Dendritic cell treated with granulocyte-macrophage colony-stimulating factor and Interleukin-4, amounts not matched to agents 40 ng/mL and 50 ng/mL, for 4 days (primary cell): ENCODE measurements at regions of chr6 and their contacts with region 1.

Region 1: DNA sequence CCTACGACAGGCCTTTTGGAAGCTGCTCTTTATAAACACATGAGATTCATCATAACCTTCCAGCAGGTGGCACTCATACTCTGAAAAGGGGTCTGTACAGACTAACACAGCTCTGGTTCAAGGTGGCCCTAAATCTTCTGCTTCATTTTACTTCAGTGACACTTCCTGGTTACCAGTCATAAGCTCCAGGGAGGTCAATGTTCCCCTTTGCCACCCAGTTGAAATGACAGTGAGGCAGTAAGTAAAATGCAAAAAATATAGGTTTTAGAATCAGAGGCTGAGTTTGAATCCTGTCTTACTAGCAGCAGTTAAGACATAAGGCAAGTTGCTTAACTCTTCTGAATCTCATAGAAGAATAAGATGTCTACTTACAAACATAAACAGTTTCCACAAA is 132.8 kb downstream of the CDK19 start:
- H3K4me3 Mint-ChIP-seq: no peak overlapping the region
- H3K27ac Mint-ChIP-seq: no peak overlapping the region
- H3K4me1 Mint-ChIP-seq: peaks cover 13% of the 10 kb centered on the region
- H3K27me3 Mint-ChIP-seq: no peaks in the 10 kb centered on the region

Region 2: GRCh38 chr6:110528101-110528929 is 154.1 kb before region 1 on chr6:
- intact Hi-C with region 1: loop called (anchors 1 kb)
- H3K4me3 Mint-ChIP-seq: no peak overlapping the region
- H3K27ac Mint-ChIP-seq: no peak overlapping the region
- H3K4me1 Mint-ChIP-seq: peaks cover 31% of the 10 kb centered on the region
- H3K27me3 Mint-ChIP-seq: no peaks in the 10 kb centered on the region

Region 3: DNA sequence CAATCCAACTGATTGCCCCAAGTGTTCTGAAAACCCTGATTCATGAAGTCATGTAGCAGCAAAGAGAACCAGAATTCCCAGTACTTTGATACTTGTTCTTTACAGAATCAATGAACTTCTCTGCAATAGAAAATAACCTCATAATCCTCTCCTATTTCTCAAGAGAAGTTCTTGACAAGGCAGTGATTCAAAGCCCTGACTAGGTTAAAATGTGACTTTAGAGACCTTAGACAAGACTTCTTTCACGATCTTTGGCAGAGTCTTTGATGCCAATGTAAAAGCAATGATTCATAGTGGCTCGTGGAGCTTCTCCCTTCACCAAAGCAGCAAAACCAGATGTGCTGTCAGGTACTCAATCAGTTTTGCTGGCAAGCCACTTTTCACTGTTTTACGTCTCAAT is 37.6 kb after region 1 on chr6:
- intact Hi-C with region 1: no loop called
- H3K4me3 Mint-ChIP-seq: no peak overlapping the region
- H3K27ac Mint-ChIP-seq: no peak overlapping the region
- H3K4me1 Mint-ChIP-seq: no peaks in the 10 kb centered on the region
- H3K27me3 Mint-ChIP-seq: no peaks in the 10 kb centered on the region

Region 4: DNA sequence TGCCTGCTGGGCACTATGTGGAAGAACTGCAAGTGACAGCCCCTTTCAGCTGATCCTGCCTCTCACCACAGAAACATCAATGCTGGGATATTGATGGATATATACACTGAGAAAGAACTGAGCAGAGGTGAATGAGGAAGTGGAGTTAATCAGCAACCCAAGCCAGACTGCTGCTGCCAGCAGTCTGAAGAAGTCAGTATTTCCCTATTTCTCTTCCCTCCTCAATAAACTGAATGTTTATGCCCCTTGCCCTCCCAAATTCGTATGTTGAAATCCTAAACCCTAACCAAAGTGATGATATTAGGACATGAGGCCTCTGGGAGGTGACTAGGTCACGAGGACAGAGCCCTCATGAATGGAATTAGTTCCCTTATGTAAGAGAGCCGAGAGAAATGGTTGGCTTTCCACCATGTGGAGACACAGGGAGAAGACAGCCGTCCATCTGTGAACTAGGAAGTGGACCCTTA is 56.5 kb after region 1 on chr6:
- intact Hi-C with region 1: loop called (anchors 10 kb)
- H3K4me3 Mint-ChIP-seq: no peak overlapping the region
- H3K27ac Mint-ChIP-seq: peak overlapping the region; percentile 69
- H3K4me1 Mint-ChIP-seq: peaks cover 28% of the 10 kb centered on the region
- H3K27me3 Mint-ChIP-seq: no peaks in the 10 kb centered on the region

Region 5: DNA sequence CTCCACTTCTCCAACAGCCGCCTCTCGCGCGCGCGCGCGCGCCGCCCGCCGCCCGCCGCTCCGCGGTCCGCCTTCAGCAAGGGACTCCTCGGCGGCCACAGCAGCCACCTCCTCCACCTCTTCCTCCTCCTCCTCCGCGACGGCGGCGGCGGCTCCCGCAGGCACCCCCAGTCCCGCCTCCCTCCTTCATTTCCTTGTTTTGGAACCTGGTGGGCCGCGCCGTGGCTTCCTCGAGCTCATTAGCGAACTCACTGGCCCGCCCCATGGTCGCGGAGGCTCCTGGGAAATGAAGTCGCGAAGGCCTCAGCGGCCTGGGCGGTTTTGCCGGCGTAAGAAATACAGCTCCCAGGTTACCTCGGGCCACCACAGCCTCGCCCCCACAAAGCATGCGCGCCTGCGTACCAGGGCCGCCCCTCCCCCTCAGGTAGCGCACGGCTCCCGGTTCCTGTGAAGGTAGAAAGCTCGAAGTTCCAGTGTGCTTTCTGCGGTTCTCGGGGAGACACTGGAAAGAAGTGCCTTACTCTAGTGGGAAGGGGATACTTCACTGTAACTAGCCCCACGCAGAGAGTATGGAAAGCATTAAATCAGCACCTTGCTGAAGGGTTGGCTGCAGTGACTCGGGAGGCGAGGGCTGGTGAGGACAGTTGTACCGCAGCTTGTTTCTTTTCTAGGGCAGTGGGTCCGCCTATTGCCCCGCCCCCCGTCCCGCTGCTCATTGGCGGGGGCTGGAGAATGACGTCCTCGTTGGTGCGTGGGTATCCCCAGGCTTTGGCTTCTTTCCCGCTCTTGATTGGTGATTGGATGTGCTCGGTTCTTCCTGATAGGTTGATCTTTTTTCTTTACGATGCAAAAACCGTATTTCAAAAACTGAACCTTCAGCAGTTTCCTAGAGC is 133.0 kb after region 1 on chr6 and contains the start of gene CDK19:
- intact Hi-C with region 1: loop called (anchors 5 kb)
- H3K4me3 Mint-ChIP-seq: peak within 1 kb of the TSS; percentile 88
- H3K27ac Mint-ChIP-seq: peak within 1 kb of the TSS; percentile 93
- H3K4me1 Mint-ChIP-seq: peaks cover 56% of the 10 kb centered on the region
- H3K27me3 Mint-ChIP-seq: no peaks in the 10 kb centered on the region

Region 6: GRCh38 chr6:110882271-110882613 is 199.8 kb after region 1 on chr6:
- intact Hi-C with region 1: loop called (anchors 5 kb)
- H3K4me3 Mint-ChIP-seq: peak overlapping the region; percentile 9
- H3K27ac Mint-ChIP-seq: peak overlapping the region; percentile 79
- H3K4me1 Mint-ChIP-seq: peaks cover 84% of the 10 kb centered on the region
- H3K27me3 Mint-ChIP-seq: no peaks in the 10 kb centered on the region

Region 7: GRCh38 chr6:110949679-110950285 is 267.3 kb after region 1 on chr6:
- intact Hi-C with region 1: loop called (anchors 1 kb)
- H3K4me3 Mint-ChIP-seq: no peak overlapping the region
- H3K27ac Mint-ChIP-seq: no peak overlapping the region
- H3K4me1 Mint-ChIP-seq: peaks cover 3% of the 10 kb centered on the region
- H3K27me3 Mint-ChIP-seq: no peaks in the 10 kb centered on the region